Prostate gland (tissue), 2 donors: ENCODE measurements at regions of chr17 and their contacts with region 1.

Region 1: GRCh38 chr17:58587702-58588254 is 73.3 kb upstream of the MTMR4 start:
- DNase-seq: peak; percentile 32
- H3K4me3 ChIP-seq: no peak overlapping the region
- H3K27ac ChIP-seq: no peak overlapping the region
- H3K4me1 ChIP-seq: no peaks in the 10 kb centered on the region
- H3K27me3 ChIP-seq: no peaks in the 10 kb centered on the region
- CTCF ChIP-seq: peak; percentile 63 to 85 (median 77)
- POLR2A ChIP-seq: no peak

Region 2: DNA sequence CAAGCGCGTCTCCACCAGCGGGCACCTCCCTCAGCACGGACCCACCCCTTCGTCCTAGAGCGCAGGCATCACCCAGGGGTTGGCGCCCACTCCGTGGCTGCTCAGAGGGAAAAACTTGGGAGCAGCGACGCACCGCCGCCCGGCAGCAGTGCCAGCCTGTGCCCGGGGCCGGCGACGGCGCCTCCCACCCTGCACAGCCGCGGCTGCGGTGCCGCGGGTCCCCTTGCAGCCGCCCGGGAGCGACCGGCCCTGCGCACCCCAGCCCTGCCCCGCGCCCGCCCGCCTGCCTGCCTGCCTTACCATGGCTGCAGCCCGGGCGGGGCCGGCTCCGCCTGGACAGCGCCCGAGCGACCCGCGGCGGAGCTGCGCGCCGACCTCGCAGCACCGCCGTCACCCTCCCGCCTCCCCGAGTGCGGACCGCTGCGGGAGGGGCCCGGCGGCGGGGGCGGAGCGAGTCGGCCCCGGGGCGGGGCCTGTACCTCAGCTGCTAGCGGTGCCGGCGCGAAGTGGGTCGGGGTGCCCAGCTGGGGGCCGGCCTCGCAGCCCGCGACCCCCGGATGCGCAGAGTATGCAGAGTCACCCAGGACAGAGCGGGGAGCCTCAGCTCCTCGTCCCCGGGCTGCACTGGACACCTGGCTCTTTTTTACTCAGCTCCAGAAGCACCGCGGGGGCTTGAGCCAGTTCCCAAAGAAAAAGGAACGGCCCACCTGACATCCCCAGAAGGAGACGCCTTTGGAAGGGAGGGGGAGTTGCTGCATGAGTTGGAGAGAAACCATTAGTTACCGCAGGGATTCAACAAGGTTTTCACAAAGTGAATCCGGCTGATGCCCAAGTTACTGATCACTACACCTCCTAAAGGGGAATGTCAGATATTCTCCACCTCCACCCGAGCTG is 55.9 kb before region 1 on chr17:
- intact Hi-C with region 1: loop called (anchors 10 kb)
- DNase-seq: peak; percentile 32
- H3K4me3 ChIP-seq: peak overlapping the region; percentile 38 to 52
- H3K27ac ChIP-seq: no peak overlapping the region
- H3K4me1 ChIP-seq: no peaks in the 10 kb centered on the region
- H3K27me3 ChIP-seq: no peaks in the 10 kb centered on the region
- CTCF ChIP-seq: no peak
- POLR2A ChIP-seq: no peak

Region 3: DNA sequence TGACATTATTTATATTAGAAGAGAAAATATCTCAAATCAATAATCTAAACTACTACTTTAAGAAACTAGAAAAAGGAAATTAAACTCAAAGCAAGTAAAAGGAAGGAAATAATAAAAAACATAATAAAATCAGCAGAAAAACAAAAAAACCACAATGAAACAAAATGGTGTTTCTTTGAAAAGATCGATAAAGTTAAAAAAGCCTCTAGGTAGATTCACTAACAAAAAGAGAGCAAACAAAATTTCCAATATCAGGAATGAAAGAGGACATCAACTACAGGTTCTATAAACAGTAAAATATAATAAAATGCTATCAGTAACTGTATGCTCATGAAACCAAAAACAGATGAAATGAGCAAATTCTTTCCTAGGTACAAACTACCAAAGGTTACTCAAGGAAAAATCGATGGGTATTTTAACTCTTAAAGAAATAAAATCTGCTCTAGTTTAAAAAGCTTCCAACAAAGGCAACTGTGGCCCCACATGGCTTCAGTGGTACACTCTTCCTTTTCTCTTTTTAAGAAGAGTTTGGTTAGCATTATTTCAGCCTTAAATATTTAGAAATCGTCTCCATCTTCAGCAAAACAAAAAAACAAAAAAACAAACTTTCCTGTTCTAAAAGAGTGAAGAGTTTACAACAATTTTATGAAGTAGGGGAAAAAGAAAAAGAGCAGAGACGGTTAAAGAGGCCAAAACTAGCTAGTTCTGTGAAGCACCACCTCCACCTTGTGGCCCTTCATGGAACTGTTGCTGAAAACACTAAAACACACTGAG is 416.7 kb after region 1 on chr17:
- intact Hi-C with region 1: loop called (anchors 5 kb)
- DNase-seq: peak; percentile 60
- H3K4me3 ChIP-seq: no peak overlapping the region
- H3K27ac ChIP-seq: peak overlapping the region; percentile 32 to 48
- H3K4me1 ChIP-seq: no peaks in the 10 kb centered on the region
- H3K27me3 ChIP-seq: no peaks in the 10 kb centered on the region
- CTCF ChIP-seq: peak; percentile 91 to 94 (median 92)
- POLR2A ChIP-seq: no peak

Region 4: GRCh38 chr17:59178266-59178978 is 590.6 kb after region 1 on chr17:
- intact Hi-C with region 1: no loop called
- DNase-seq: no peak
- H3K4me3 ChIP-seq: no peak overlapping the region
- H3K27ac ChIP-seq: no peak overlapping the region
- H3K4me1 ChIP-seq: no peaks in the 10 kb centered on the region
- H3K27me3 ChIP-seq: no peaks in the 10 kb centered on the region
- CTCF ChIP-seq: no peak
- POLR2A ChIP-seq: no peak